T-cell (primary cell): ENCODE measurements at regions of chr19 and their contacts with region 1.

Region 1: GRCh38 chr19:10346509-10346908 is 7.1 kb upstream of the ICAM3 start:
- DNase-seq: peak in 1 of 35 experiments; percentile 9
- ATAC-seq: no peak
- H3K4me3 ChIP-seq: no peak overlapping the region
- H3K4me3 Mint-ChIP-seq: no peak overlapping the region
- H3K27ac ChIP-seq: no peak overlapping the region
- H3K27ac Mint-ChIP-seq: no peak overlapping the region
- H3K4me1 ChIP-seq: no peaks in the 10 kb centered on the region
- H3K4me1 Mint-ChIP-seq: no peaks in the 10 kb centered on the region
- H3K27me3 ChIP-seq: no peaks in the 10 kb centered on the region
- H3K27me3 Mint-ChIP-seq: no peaks in the 10 kb centered on the region

Region 2: DNA sequence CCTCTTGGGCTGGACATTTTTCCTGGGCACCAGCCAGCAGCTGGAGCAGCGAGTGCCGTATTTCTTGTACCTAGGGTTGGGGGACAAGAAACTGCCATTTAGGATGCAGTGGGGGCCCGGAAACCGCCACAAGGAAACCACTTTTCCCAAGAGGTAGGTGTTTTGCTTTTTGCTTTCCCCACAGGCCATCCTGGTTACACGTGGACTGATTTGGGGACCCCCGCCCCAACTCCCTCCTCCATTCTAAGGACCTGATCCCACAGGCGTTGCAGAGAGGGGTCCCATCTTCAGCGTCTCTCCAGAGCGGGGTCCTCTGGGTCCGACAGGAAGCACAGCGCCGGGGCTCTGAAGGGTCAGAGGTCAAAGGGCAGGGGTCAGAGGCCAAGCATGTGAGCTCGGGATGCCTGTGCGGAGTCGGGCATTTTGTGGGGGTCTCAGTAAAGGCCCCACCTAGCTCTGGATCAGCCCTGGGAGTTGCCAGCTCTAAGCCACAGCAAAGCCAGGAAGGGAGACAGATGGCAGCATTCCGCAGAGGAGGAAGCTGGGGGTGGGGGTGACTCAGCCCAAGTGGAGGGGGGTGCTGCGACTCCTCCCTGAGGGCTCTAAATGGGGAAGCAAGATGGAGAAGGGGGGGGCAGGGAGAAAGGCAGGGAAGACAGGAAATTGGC is 41.2 kb before region 1 on chr19:
- CTCF ChIA-PET with region 1: no interaction called
- POLR2A ChIA-PET with region 1: no interaction called
- DNase-seq: peak in 1 of 35 experiments; percentile 17
- ATAC-seq: no peak
- H3K4me3 ChIP-seq: no peak overlapping the region
- H3K4me3 Mint-ChIP-seq: no peak overlapping the region
- H3K27ac ChIP-seq: no peak overlapping the region
- H3K27ac Mint-ChIP-seq: no peak overlapping the region
- H3K4me1 ChIP-seq: no peaks in the 10 kb centered on the region
- H3K4me1 Mint-ChIP-seq: no peaks in the 10 kb centered on the region
- H3K27me3 ChIP-seq: peaks cover 0 to 5% of the 10 kb centered on the region in 2 experiments
- H3K27me3 Mint-ChIP-seq: no peaks in the 10 kb centered on the region

Region 3: DNA sequence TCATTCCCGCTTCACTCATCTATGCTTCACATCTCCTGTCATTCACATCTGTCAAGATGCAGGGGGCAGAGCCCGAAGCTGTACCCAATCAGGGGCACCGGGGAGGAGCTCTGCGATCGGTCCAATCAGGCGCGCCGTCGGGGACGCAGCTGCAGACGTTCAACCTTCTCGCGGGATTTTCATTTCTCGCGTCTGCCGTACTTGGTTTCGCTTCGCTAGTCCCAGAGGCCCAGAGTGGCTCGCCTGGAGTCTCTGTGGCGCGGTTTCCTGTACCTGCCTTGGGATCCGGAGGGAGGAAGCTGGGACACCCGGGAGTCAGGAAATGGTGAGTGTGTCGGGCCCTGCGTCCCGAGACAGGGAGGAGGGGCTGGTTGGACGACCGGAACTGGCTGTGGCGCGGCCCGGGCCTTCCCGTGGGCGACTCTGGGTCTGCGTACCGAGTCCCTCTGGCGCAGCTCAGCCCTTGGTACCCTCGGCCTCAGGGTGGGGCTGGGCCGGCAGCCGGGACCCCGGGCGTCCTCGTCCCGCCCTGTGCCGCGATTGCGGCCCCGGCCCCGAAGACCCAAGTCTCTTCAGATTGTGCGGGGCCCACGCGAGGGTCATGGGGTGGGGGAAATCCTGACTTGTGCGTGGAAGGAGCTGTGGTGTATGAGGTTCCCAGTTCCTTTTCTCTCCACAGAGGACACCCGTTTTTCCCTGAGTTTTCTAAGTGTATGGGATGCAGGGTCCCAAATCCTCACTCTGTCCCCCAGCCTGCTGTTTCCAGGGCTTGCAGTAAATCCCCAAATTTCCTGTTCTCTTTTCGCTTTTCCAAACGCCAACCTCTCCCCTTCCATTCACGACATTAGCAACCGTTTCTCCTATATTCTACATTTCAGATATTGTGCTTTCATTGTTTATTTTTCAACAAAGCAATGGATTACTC is 1816.6 kb after region 1 on chr19 and contains the start of gene ZNF136:
- CTCF ChIA-PET with region 1: no interaction called
- POLR2A ChIA-PET with region 1: interaction called in 1 of 2 experiments, 11 read pairs
- DNase-seq: peak; percentile 79 to 97 (median 92)
- ATAC-seq: peak; percentile 98 to 100 (median 100)
- H3K4me3 ChIP-seq: peak within 1 kb of the TSS; percentile 83 to 100
- H3K4me3 Mint-ChIP-seq: peak within 1 kb of the TSS; percentile 93 to 97 (median 95)
- H3K27ac ChIP-seq: peak within 1 kb of the TSS; percentile 98
- H3K27ac Mint-ChIP-seq: peak within 1 kb of the TSS; percentile 95 to 97
- H3K4me1 ChIP-seq: peaks cover 5 to 30% of the 10 kb centered on the region in 2 experiments
- H3K4me1 Mint-ChIP-seq: peaks cover 48 to 53% (median 51%) of the 10 kb centered on the region in 3 donors
- H3K27me3 ChIP-seq: no peaks in the 10 kb centered on the region
- H3K27me3 Mint-ChIP-seq: peaks cover 0 to 2% of the 10 kb centered on the region in 2 donors
- total RNA-seq, gene ZNF136: 20.2 to 39.3 (median 22.7) TPM